Mammary epithelial cell (primary cell): ENCODE measurements at regions of chr1 and their contacts with region 1.

Region 1: GRCh38 chr1:173824331-173825081 is at the starts of genes CENPL and DARS2:
- DNase-seq: peak; percentile 97
- H3K4me3 ChIP-seq: peak within 1 kb of the TSS; percentile 77 to 100 (median 91)
- H3K27ac ChIP-seq: peak within 1 kb of the TSS; percentile 83
- H3K4me1 ChIP-seq: peaks cover 5% of the 10 kb centered on the region
- H3K27me3 ChIP-seq: no peaks in the 10 kb centered on the region
- CTCF ChIP-seq: no peak
- total RNA-seq, gene CENPL: 7.7 to 21.6 TPM
- total RNA-seq, gene DARS2: 22.3 to 29.9 TPM

Region 2: GRCh38 chr1:173255214-173255813 is 569.2 kb before region 1 on chr1:
- CTCF ChIA-PET with region 1: no interaction called
- dilution Hi-C with region 1: no loop called
- in situ Hi-C with region 1: loop called in 1 of 2 experiments (anchors 25 kb)
- intact Hi-C with region 1: loop called (anchors 5 kb)
- DNase-seq: peak; percentile 21
- H3K4me3 ChIP-seq: no peak overlapping the region
- H3K27ac ChIP-seq: no peak overlapping the region
- H3K4me1 ChIP-seq: peaks cover 4% of the 10 kb centered on the region
- H3K27me3 ChIP-seq: no peaks in the 10 kb centered on the region
- CTCF ChIP-seq: peak; percentile 82 to 85

Region 3: DNA sequence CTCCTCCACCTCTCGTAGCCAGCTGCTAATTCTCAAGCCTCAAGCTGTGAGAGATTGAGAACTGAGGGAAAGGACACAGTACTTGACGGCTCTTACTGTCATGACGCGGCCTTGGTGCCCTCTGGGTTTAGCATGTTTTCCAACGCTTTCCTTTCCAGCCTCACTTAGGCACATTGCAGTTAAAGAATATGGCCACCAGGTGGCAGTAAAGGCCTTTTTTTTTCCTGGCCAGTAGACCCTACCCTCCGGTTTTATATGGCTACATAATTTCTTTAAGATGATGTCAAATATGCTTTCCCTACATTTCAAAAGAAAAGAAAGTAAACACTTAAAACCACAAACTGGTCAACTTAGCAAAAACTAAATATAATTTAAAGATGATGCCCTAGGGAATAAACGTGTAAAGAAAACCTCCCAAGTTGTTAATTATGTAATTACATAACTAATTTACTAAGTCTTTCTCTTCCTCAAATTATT is 404.1 kb before region 1 on chr1:
- CTCF ChIA-PET with region 1: no interaction called
- dilution Hi-C with region 1: no loop called
- in situ Hi-C with region 1: loop called in 1 of 2 experiments (anchors 10 kb)
- intact Hi-C with region 1: loop called (anchors 1 kb)
- DNase-seq: peak; percentile 68
- H3K4me3 ChIP-seq: no peak overlapping the region
- H3K27ac ChIP-seq: no peak overlapping the region
- H3K4me1 ChIP-seq: peaks cover 19% of the 10 kb centered on the region
- H3K27me3 ChIP-seq: no peaks in the 10 kb centered on the region
- CTCF ChIP-seq: peak; percentile 77 to 85

Region 4: DNA sequence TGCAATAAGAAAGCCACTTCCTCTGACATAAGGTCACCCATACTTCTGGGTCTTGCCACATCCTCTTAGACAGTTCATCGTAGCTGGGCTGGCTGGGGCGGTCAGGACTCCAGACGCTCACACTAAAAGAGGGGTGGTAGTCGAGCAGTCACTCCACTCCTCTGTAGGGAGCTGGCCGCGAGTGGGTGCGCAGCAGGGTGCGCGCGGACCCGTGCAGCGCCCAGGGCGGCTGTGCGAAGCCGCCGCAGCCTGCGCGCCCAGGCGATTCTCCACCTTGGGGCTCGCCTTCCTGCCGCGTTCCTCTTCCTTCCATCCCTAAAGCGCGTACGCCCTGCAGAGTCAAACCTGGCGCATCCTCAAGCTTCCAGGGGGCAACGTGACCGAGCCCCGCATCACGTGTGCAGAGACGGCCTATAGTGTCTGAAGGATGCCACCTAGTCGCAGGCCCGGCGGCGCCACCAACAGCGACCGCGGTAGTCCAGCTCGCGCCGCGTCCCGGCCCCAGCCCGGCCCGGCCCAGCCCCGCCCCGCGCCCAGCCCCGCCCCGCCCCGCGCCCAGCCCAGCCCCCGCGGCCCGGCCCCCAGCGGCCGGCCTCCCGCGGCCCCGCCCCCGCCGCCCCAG is 347.7 kb before region 1 on chr1:
- CTCF ChIA-PET with region 1: interaction called, 4 read pairs
- dilution Hi-C with region 1: no loop called
- in situ Hi-C with region 1: no loop called
- intact Hi-C with region 1: loop called (anchors 1 kb)
- DNase-seq: peak; percentile 86
- H3K4me3 ChIP-seq: peak overlapping the region; percentile 77 to 94 (median 92)
- H3K27ac ChIP-seq: peak overlapping the region; percentile 40
- H3K4me1 ChIP-seq: peaks cover 47% of the 10 kb centered on the region
- H3K27me3 ChIP-seq: no peaks in the 10 kb centered on the region
- CTCF ChIP-seq: no peak

Region 5: GRCh38 chr1:173532237-173532636 is 292.3 kb before region 1 on chr1:
- CTCF ChIA-PET with region 1: no interaction called
- dilution Hi-C with region 1: no loop called
- in situ Hi-C with region 1: no loop called
- intact Hi-C with region 1: loop called (anchors 10 kb)
- DNase-seq: no peak
- H3K4me3 ChIP-seq: peak overlapping the region in 1 of 3 experiments; percentile 8
- H3K27ac ChIP-seq: no peak overlapping the region
- H3K4me1 ChIP-seq: peaks cover 5% of the 10 kb centered on the region
- H3K27me3 ChIP-seq: no peaks in the 10 kb centered on the region
- CTCF ChIP-seq: no peak

Region 6: DNA sequence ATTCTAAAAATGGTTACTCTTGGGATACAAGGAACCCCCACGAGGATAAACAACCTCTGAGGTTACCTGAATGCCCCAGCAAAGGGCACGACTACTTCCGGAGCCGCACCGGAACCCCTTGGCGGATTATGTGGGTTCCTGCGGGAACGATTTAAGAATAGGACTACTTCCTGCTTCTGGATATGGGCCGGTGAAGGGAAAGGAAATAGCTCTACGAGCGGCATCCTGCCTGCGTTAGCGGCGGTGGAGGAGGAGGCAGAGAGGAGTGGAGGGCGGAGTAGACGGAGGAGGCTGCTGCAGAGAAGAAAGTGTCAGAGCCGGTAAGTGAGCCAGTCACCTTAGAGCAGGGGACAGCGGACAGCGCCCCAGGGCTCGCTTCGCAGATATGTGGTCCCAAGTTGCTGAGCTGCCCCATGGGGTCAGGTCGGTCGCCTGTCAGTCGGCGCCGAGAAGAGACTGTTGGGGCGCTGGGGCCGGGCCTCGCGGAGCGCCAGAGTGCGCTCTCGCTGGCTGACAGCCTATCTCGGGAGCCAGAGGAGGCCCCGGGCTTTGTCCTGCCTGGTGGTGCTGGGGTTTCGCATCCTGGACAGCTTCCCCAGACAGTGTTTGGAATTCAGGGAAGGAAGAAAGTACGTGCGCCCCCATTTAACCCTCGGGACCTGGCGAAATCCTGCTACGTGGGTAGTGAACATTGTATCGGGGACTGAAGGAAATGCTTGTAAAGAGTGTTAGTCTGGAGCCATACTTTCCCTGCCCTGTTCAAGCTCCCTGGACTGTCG is 109.6 kb before region 1 on chr1 and contains the start of gene KLHL20:
- CTCF ChIA-PET with region 1: no interaction called
- dilution Hi-C with region 1: no loop called
- in situ Hi-C with region 1: no loop called
- intact Hi-C with region 1: loop called (anchors 2 kb)
- DNase-seq: peak; percentile 89
- H3K4me3 ChIP-seq: peak within 1 kb of the TSS; percentile 74 to 95 (median 84)
- H3K27ac ChIP-seq: peak within 1 kb of the TSS; percentile 47
- H3K4me1 ChIP-seq: peaks cover 4% of the 10 kb centered on the region
- H3K27me3 ChIP-seq: no peaks in the 10 kb centered on the region
- CTCF ChIP-seq: no peak
- total RNA-seq, gene KLHL20: 25.7 to 26.3 TPM

Region 7: DNA sequence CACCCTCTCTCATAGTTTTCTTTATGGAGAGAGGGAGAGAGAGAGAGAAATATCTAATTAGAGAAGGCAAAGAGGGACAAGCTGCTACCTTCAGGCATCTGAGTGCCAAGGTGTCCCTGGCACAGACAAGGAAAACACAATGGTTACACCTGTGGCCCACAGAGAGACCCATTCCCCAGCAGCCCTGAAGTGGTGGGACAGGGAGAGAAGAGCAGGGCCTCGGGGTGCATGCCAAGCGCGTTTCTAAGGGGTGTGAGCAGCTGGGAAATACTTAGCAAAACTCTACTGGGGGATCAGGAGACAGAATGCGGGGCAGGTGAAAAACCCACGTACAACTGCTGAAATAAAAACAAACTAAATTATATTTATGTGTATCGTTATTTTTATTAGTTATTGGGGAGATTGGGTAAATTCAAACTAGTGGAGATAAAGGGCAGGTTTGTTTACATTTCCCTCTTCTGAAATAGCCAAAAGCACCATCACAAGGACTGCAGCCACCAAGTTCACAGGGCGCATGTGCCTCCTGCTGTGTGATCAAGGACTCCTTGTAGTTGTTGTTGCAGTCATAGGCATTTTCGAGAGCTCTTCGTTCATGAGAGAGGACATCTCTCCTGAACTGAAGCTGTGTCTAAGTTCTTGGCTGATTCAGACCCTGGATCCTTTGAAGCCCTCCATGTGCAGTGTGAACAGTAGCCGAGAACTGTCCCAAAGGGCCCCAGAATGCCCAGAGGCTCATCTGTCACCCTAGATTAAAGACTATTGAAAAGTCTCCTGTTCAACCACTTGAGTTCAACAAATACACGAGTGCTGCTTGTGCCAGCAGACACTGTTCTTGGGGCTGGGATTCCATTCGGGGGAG is 93.4 kb after region 1 on chr1:
- CTCF ChIA-PET with region 1: no interaction called
- dilution Hi-C with region 1: no loop called
- in situ Hi-C with region 1: no loop called
- intact Hi-C with region 1: no loop called
- DNase-seq: no peak
- H3K4me3 ChIP-seq: no peak overlapping the region
- H3K27ac ChIP-seq: no peak overlapping the region
- H3K4me1 ChIP-seq: no peaks in the 10 kb centered on the region
- H3K27me3 ChIP-seq: no peaks in the 10 kb centered on the region
- CTCF ChIP-seq: no peak